MCF 10A (cell line): ENCODE measurements at regions of chr15 and their contacts with region 1.

Region 1: DNA sequence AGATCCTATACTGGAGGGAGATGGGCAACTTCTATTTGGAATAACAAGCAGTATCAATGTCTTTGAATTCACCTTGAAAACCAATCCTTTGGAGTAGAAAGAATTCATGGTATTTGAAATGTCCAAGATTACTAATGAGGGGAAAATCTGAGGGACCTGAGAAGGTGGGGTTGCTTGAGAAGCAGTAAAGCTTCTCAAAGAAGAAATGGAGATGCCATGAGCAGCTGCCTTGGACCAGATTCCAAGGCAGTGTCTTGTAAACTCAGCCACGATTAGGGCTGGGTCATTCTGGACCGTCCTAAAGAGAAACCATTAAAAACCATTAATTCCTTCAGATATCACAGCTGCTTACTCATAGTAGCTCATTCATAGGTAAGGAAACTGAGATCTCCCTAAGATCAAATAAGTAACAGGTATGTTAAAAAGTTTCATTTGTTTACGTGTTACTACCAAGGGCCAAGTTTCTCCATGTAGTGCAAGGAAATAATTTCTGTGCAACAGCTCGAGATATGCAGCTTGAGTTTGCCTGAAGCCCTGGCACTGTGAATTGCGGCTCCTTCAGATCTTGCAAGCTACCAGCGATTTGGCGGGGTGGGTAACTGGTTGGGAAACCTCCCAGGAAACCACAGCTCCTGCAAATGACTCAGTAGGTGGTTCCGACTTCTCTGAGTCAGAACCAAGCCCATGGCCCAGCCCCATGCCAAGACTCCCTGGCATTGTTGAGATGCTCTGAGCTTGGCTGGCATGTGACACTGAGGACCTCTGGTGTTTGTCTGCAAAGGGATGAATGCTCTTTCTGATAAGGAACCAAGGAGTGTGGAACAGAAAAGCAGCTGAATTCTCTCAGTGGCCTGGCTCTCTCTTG is 296.8 kb downstream of the RORA start:
- DNase-seq: peak; percentile 98
- H3K4me3 Mint-ChIP-seq: no peak overlapping the region
- H3K27ac Mint-ChIP-seq: no peak overlapping the region
- H3K4me1 Mint-ChIP-seq: peaks cover 29% of the 10 kb centered on the region
- H3K27me3 Mint-ChIP-seq: peaks cover 40% of the 10 kb centered on the region
- CTCF ChIP-seq: peak; percentile 67

Region 2: DNA sequence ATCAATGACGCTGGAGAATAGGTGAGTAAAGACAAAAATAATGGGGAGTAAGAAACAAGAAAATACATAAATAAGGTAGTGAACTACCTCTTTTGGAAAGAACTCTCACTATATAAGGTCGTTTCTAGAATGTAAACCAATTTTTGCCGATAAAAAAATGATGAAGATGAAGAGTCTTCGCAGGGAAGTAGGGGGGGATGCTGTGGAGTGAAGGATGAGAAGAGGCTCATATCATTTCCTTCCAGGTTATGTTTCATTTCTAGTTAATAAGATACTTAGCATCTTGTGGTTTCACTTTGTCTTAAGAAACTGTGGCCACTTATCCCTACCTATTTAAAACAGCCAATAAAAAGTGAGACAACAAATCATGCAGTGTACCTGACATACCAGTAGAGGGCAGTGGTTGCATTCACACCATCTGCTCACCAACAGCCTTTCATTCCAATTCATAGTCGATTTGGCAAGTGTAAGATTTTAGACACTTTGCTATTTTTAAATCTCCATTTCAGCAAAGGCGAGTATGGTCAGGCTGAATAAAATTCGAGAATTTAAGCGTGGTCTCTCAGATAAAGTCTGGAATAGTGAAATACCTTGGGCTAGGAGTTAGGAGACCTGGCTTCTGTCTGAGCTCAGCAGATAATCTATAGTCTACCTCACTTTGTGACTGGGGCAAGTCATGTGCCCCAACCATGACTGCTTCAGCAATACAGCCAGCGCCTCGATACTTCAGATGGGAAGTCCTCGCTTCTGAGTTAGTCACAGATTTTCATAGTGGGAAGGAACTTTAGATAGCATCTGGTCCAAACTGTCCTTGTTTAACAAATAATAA is 424.5 kb before region 1 on chr15:
- CTCF ChIA-PET with region 1: interaction called, 8 read pairs
- POLR2A ChIA-PET with region 1: interaction called, 4 read pairs
- intact Hi-C with region 1: loop called (anchors 1 kb)
- DNase-seq: peak; percentile 76
- H3K4me3 Mint-ChIP-seq: no peak overlapping the region
- H3K27ac Mint-ChIP-seq: no peak overlapping the region
- H3K4me1 Mint-ChIP-seq: no peaks in the 10 kb centered on the region
- H3K27me3 Mint-ChIP-seq: no peaks in the 10 kb centered on the region
- CTCF ChIP-seq: peak; percentile 87

Region 3: DNA sequence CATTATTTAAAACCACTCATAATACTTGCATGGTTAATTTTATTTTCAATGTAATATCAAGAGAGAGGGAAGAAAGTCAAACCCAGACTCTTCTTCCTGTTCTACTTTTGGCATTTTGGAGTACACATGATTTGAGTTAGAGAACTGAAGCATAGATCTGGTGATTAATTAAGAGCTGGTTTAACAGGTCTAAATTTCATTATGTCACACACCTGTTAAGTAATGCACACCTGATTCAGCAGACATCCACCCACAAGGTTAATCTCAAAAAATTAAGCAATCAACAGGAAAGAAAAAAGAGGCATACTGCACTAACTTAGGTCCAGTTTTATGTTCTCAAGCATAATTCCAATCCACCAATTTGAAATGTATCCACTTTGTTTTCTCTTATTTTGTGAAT is 352.2 kb before region 1 on chr15:
- CTCF ChIA-PET with region 1: interaction called, 73 read pairs
- POLR2A ChIA-PET with region 1: interaction called, 11 read pairs
- intact Hi-C with region 1: no loop called
- DNase-seq: no peak
- H3K4me3 Mint-ChIP-seq: no peak overlapping the region
- H3K27ac Mint-ChIP-seq: no peak overlapping the region
- H3K4me1 Mint-ChIP-seq: peaks cover 12% of the 10 kb centered on the region
- H3K27me3 Mint-ChIP-seq: no peaks in the 10 kb centered on the region
- CTCF ChIP-seq: no peak

Region 4: GRCh38 chr15:60592371-60593169 is 339.7 kb before region 1 on chr15:
- CTCF ChIA-PET with region 1: interaction called, 73 read pairs
- POLR2A ChIA-PET with region 1: interaction called, 11 read pairs
- intact Hi-C with region 1: no loop called
- DNase-seq: peak; percentile 66
- H3K4me3 Mint-ChIP-seq: peak overlapping the region; percentile 67
- H3K27ac Mint-ChIP-seq: no peak overlapping the region
- H3K4me1 Mint-ChIP-seq: peaks cover 11% of the 10 kb centered on the region
- H3K27me3 Mint-ChIP-seq: no peaks in the 10 kb centered on the region
- CTCF ChIP-seq: no peak

Region 5: DNA sequence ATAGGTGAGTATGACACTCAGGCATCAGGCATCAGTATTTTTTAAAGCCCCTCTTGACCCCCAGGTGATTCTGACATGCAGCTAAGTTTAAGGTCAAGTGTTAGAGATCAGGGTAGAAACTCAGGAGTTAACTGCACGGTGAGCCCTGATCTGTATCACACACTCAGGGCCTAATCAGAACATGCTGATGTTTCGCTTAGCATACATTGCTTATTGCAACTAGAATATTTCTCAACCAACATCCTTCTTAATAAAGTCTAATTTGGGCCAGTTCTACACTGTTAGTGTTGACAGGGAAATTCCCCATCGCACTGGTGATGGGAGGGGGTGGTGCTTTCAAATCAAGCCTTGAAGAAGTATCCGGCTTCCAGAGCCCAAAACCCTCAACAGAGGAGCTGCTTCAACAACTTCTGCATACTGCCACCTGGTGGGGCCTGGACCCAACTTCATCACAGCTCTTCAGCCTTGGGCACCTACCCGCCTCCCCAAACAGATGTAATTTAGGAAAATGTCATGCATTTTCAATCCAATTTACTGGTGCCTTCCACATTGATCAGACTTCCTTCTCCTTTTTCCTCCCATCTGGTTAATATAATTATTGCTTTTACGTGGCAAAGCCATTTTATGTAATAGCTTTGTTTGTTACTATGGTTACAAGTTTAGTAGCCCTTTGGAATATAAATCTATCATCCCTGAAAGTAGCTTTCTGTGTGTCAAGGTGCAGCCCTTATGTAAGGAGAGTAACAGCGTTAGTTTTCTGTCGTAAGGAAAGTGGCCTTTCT is 15.4 kb before region 1 on chr15:
- CTCF ChIA-PET with region 1: interaction called, 70 read pairs
- POLR2A ChIA-PET with region 1: interaction called, 13 read pairs
- intact Hi-C with region 1: loop called (anchors 2 kb)
- DNase-seq: peak; percentile 80
- H3K4me3 Mint-ChIP-seq: no peak overlapping the region
- H3K27ac Mint-ChIP-seq: no peak overlapping the region
- H3K4me1 Mint-ChIP-seq: no peaks in the 10 kb centered on the region
- H3K27me3 Mint-ChIP-seq: no peaks in the 10 kb centered on the region
- CTCF ChIP-seq: peak; percentile 74